ENCODE measurements at regions of chr1 and their contacts with region 1.

Region 1: DNA sequence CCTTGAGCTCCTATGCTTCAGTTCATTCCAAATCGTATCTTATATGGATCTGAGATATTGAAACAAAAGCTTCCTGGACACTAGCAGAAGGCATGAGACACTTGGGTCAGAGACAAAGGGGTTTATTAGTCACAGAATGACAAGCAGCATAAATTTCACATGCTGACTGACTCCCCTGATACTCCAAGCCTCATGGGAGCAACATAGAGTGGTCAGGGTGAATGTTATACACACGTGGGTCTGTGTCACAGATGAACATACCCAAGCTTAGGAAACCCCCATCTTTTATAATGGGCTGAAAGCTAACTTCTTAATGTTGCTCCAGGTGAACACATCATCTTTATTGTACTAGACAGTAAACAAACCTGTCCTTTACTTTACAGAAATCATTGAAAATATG is 599.9 kb upstream of the RGS18 start:
- DNase-seq: no peak
- H3K4me3 ChIP-seq: no peak overlapping the region
- CTCF ChIP-seq: no peak

Region 2: DNA sequence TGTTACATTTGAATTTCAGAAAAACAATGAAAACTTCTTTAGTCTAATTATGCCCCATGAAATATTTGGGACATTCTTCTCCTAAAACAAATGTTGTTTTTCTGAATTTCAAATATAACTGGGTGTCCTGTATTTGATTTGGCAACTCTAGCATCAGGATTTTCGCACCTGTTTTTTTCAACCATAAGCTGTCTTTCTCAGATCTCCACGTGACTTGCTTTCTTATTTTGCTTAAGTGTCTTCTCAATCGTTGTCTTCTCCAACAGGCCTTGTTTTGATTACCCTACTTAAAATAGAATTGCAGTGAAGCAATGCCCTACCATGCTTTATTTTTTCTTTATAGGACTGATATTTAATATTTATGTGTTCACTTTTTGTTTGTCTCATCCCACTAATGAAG is 153.0 kb before region 1 on chr1:
- in situ Hi-C with region 1: no loop called
- DNase-seq: no peak
- H3K4me3 ChIP-seq: no peak overlapping the region
- CTCF ChIP-seq: no peak

Region 3: GRCh38 chr1:191508239-191508638 is 50.1 kb before region 1 on chr1:
- in situ Hi-C with region 1: no loop called
- DNase-seq: no peak
- H3K4me3 ChIP-seq: no peak overlapping the region
- CTCF ChIP-seq: no peak

Region 4: DNA sequence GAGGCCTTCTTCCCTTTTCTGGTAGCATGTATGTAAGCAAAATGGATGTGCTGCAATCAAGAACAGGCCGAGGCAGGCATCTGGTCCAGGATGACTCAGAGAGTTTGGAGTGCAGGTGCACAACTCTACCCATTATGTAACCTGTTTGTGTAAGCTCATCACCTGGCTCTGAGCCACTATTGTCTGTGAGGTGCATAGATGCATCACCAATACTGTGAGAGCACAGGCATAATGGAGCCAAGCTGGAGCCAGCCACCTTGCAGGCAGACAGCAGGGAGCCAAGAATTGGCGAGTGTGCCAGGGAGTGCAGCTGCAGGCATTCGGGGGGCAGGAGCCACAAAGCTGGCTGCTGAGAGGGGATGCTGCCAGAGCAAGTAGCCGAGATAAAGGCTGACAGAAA is 50.0 kb after region 1 on chr1:
- in situ Hi-C with region 1: loop called (anchors 5 kb)
- DNase-seq: no peak
- H3K4me3 ChIP-seq: no peak overlapping the region
- CTCF ChIP-seq: no peak

Measured in astrocyte of the cerebellum (primary cell).